ENCODE measurements at regions of chr10 and their contacts with region 1.

Region 1: DNA sequence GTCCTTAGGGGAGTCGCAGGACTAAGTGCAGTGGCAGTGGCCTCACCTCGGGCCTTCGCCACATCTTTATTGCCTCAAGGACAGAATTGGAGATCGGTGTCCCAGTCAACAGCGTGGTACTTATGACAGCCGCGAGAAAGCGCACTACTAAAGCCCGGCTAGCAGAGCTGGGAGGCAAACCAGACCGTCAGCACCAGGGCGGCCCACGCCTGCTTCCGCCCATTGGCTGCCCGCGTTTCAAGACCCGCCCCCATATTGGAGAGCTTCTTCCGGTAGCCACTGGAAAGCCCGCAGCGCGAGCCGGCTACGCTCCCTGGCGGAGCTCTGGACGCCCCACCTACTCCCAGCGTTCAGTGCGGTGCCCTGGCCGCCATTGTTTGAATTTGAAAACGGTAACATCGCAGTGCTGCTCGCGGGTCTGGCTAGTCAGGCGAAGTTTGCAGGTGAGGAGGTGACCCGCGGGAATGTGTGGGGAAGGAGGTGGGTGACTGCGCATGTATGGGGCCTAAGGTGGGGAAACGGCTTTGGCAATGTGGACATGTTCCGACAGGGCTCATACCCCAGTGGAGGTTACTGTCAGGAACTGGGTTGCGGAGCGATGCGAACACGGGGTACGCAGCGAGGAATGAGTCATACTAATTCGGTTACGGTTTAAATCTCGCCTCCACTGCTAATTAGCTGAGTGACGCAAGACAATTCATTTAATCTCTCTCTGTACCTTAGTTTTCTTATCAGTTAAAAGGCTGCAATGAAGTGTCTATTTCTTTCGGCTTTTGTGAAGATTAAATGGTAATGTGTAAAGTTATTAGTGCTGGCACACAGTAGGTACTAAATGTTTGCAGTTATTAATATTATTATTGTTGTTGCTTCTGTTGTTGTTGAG is at the start of gene KIF20B:
- DNase-seq: peak; percentile 89 to 94 (median 90)
- ATAC-seq: peak; percentile 90
- H3K4me3 ChIP-seq: peak within 1 kb of the TSS; percentile 68
- H3K27ac ChIP-seq: peak within 1 kb of the TSS; percentile 98
- H3K4me1 ChIP-seq: peaks cover 0 to 5% of the 10 kb centered on the region in 2 experiments; a peak in 2 of 5 replicates
- H3K27me3 ChIP-seq: no peaks in the 10 kb centered on the region
- CTCF ChIP-seq: peak in 2 of 3 experiments; percentile 44 to 48; a peak in 4 of 6 replicates
- EP300 ChIP-seq: no peak
- POLR2A ChIP-seq: peak; percentile 94
- RAD21 ChIP-seq: peak in 1 of 2 experiments; percentile 45; a peak in 3 of 4 replicates
- polyA plus RNA-seq, gene KIF20B: 32.9 to 56.5 TPM

Region 2: GRCh38 chr10:87861953-87862678 is 1839.4 kb before region 1 on chr10:
- CTCF ChIA-PET with region 1: no interaction called
- POLR2A ChIA-PET with region 1: no interaction called
- in situ Hi-C with region 1: no loop called
- intact Hi-C with region 1: no loop called
- DNase-seq: peak; percentile 79 to 94 (median 83)
- ATAC-seq: peak; percentile 60
- H3K4me3 ChIP-seq: peak overlapping the region; percentile 88
- H3K27ac ChIP-seq: peak overlapping the region; percentile 79
- H3K4me1 ChIP-seq: peaks cover 3 to 11% of the 10 kb centered on the region in 2 experiments; a peak in 4 of 5 replicates
- H3K27me3 ChIP-seq: no peaks in the 10 kb centered on the region
- CTCF ChIP-seq: no peak
- EP300 ChIP-seq: no peak
- POLR2A ChIP-seq: peak; percentile 78
- RAD21 ChIP-seq: no peak

Region 3: GRCh38 chr10:89643431-89644331 is 57.8 kb before region 1 on chr10:
- CTCF ChIA-PET with region 1: interaction called, 5 read pairs
- POLR2A ChIA-PET with region 1: interaction called, 4 read pairs
- in situ Hi-C with region 1: no loop called
- intact Hi-C with region 1: loop called (anchors 1 kb)
- DNase-seq: peak; percentile 86 to 93 (median 90)
- ATAC-seq: peak; percentile 88
- H3K4me3 ChIP-seq: peak overlapping the region; percentile 74
- H3K27ac ChIP-seq: peak overlapping the region; percentile 84
- H3K4me1 ChIP-seq: peaks cover 13 to 29% of the 10 kb centered on the region in 2 experiments; a peak in 4 of 5 replicates
- H3K27me3 ChIP-seq: no peaks in the 10 kb centered on the region
- CTCF ChIP-seq: no peak
- EP300 ChIP-seq: no peak
- POLR2A ChIP-seq: peak; percentile 93
- RAD21 ChIP-seq: no peak